ENCODE measurements at regions of chr15 and their contacts with region 1.

Region 1: DNA sequence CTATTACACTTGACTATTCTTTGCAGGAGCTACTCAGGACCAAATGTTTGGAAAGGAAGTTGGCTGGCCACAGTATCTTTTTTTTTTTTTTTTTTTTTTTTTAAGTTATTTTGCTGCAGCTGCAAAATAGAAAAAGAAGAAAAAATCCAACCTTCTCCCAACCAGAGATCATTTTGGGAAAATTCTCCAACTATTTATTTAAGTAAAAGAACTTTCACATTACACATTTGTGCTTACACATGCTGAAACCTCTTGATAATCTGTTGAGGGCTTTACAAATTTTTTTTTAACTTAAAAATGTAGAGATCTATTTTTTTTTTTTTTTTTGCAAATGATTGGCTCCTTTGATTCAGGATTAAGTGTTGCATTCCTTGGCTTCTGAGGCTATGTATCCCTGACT is 148.0 kb downstream of the POLR2M start:
- DNase-seq: no peak
- H3K4me3 ChIP-seq: no peak overlapping the region
- H3K27ac ChIP-seq: no peak overlapping the region
- H3K4me1 ChIP-seq: no peaks in the 10 kb centered on the region
- H3K27me3 ChIP-seq: peaks cover 22% of the 10 kb centered on the region
- CTCF ChIP-seq: no peak

Region 2: DNA sequence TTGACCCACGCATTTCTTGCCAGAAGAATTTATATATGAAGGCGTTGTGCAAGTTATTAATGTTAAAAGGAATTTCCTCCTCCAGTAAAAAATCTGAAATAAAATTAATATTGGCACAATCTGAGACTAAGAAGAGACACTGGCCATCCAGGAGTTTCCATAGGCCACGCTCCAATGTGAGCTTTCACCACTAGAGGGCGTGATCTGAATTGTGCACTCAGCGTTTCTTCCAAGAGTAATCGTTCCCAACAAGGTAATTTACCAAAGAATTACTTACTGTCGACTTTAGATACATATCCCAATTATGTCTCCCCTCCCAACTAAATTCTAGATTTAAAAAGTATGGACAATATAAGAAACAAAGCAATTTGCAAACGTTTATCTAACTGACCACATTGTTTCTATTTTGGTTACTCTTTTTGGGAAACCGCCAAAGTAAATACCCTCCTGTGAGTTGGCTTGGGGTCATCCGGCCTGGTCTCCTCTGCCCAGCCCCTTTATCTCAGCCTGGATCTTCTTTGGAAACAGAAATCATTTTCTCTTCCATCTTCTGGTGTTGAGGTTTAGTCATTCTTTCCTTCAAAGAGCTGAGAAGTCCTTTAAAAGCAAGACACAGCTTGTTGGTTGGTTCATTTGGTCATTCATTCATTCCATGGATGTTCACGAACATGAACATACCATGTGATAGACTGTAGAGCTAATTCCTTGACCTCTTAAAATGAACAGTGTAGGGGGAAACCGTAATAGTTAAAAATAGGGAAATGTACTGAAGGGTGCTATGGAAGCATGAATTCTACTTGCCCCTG is 121.8 kb before region 1 on chr15:
- CTCF ChIA-PET with region 1: interaction called, 4 read pairs
- POLR2A ChIA-PET with region 1: no interaction called
- intact Hi-C with region 1: loop called (anchors 5 kb)
- DNase-seq: peak in 1 of 2 experiments; percentile 45
- H3K4me3 ChIP-seq: no peak overlapping the region
- H3K27ac ChIP-seq: no peak overlapping the region
- H3K4me1 ChIP-seq: no peaks in the 10 kb centered on the region
- H3K27me3 ChIP-seq: no peaks in the 10 kb centered on the region
- CTCF ChIP-seq: peak; percentile 85

Region 3: DNA sequence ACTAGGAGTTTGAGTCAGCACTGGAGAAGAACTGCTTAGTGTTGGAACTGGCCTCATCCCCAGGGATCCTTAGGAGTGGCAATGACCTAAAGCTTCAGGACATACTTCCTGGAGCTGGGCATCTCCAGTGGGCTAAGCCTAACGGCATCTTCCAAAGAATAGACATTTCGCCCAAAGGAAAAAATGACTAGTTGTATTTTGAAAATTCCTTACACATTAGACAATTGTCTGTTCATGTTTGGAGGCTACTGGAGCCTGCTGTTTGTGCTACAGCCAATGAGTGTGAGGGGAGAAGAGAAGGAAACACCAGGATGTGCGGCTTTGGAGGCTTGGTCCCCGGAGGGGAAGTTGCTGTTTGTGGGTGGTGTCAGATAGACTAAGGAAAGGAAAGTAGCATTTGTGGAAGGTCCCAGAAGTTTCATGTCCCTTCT is 70.4 kb before region 1 on chr15:
- CTCF ChIA-PET with region 1: no interaction called
- POLR2A ChIA-PET with region 1: no interaction called
- intact Hi-C with region 1: no loop called
- DNase-seq: no peak
- H3K4me3 ChIP-seq: no peak overlapping the region
- H3K27ac ChIP-seq: no peak overlapping the region
- H3K4me1 ChIP-seq: no peaks in the 10 kb centered on the region
- H3K27me3 ChIP-seq: no peaks in the 10 kb centered on the region
- CTCF ChIP-seq: no peak